Activated CD4-positive, alpha-beta T cell treated with anti-CD3 and anti-CD28 coated beads for 36 hours (primary cell): ENCODE measurements at regions of chr16 and their contacts with region 1.

Region 1: GRCh38 chr16:89574681-89575246 is 794 bp upstream of the CPNE7 start:
- DNase-seq: peak; percentile 82
- ATAC-seq: peak; percentile 86
- H3K4me3 Mint-ChIP-seq: peak overlapping the region; percentile 39
- H3K27ac Mint-ChIP-seq: no peak overlapping the region
- H3K4me1 Mint-ChIP-seq: peaks cover 12% of the 10 kb centered on the region
- H3K27me3 Mint-ChIP-seq: peaks cover 3% of the 10 kb centered on the region

Region 2: DNA sequence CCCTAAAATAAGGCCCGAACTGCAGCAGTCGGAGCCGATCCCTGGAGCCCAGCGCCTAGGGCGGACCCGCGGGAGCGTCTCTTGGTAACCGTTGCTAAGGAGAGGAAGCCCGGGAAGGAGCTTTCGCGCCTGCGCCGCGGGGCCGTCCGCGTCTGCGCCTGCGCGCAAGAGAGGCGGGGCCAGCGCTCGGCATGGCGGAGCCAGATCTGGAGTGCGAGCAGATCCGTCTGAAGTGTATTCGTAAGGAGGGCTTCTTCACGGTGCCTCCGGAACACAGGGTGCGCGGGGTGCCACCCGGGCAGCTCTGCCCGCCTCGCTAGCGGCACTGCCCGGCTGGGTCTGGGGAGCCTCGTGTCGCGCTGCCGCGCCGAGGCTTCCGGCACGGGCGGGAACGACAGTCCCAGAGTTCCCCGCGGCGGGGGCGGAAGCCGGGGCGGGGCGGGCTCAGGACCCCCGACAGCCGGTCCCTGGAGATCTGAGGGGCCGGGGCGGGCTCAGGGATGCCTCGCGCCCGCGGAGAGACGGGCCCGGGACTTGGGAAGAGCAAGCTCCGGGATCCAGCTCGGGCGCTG is 111.8 kb after region 1 on chr16 and contains the start of gene CDK10:
- CTCF ChIA-PET with region 1: interaction called, 3 read pairs
- POLR2A ChIA-PET with region 1: no interaction called
- intact Hi-C with region 1: loop called in 1 of 2 experiments (anchors 1 kb)
- DNase-seq: peak; percentile 92
- ATAC-seq: peak; percentile 90
- H3K4me3 Mint-ChIP-seq: peak within 1 kb of the TSS; percentile 86
- H3K27ac Mint-ChIP-seq: peak within 1 kb of the TSS; percentile 88
- H3K4me1 Mint-ChIP-seq: peaks cover 14% of the 10 kb centered on the region
- H3K27me3 Mint-ChIP-seq: no peaks in the 10 kb centered on the region
- total RNA-seq, gene CDK10: 78.1 to 89.8 TPM